ENCODE measurements at regions of chr2 and their contacts with region 1.

Region 1: DNA sequence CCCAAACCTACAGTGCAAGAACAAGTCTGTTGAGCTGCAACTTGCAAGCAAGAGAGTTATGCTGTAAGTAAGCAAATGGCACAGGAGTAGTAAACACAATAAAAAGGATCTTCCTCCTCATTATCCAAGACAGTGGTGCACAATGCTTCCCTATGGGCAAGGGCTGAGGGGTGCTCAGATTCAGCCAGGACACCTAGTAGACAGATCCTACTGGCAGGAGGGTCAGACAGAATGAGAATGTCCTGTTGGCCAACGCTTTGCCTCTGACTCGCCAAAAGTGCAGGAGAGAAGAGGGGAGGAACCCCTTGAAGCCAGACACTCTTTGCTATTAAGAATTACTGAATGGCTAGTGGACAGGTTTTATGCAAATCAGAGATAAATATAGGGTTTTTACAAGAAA is 280.4 kb upstream of the SESTD1 start:
- DNase-seq: no peak
- H3K4me3 Mint-ChIP-seq: no peak overlapping the region
- H3K27ac Mint-ChIP-seq: no peak overlapping the region
- H3K4me1 Mint-ChIP-seq: no peaks in the 10 kb centered on the region
- H3K27me3 Mint-ChIP-seq: no peaks in the 10 kb centered on the region

Region 2: DNA sequence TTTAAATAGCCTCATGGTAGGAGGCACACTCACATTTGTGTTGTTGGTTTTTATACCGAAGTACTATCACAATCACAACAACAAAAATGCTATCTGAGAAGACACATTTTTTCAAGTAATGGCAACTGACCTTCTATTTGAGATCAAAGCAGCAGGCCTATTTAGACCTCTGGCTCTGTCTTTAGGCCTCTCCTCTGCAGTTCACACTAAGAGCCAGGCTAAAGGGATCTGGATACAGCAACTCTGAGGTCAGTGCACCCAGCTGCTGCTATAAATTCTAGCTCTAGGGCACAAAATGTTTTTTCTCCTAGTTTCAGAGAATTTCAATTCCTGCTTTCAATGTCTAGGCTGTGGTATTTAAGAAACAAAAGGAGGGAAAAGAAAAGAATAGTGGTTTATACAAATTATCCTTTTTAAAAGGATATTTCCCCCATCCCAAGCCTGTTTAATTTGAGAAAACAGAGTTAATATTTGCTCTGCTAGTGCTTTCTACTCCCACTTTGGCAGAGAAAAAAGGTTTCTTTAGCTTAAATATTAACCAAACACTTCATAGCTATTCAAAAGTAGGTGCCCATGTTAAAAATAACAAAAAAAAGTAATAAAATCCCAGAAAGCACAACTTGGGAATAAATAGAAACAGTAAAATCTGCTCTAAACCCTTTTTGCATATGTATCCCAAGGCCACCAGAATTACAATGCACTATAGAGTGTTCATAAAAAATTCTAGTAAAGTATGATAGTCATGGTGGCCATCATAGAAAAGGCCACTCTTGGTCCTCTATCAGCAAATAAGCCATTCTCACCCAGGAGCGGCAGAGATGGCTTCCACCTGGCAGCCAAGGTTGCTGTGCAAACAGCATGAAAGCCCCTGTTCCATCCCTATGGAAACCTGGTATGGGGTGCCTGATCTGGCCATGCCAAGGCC is 13.2 kb after region 1 on chr2:
- CTCF ChIA-PET with region 1: no interaction called
- intact Hi-C with region 1: loop called (anchors 2 kb)
- DNase-seq: no peak
- H3K4me3 Mint-ChIP-seq: no peak overlapping the region
- H3K27ac Mint-ChIP-seq: no peak overlapping the region
- H3K4me1 Mint-ChIP-seq: no peaks in the 10 kb centered on the region
- H3K27me3 Mint-ChIP-seq: no peaks in the 10 kb centered on the region